Caco-2 (cell line): ENCODE measurements at regions of chr2 and their contacts with region 1.

Region 1: DNA sequence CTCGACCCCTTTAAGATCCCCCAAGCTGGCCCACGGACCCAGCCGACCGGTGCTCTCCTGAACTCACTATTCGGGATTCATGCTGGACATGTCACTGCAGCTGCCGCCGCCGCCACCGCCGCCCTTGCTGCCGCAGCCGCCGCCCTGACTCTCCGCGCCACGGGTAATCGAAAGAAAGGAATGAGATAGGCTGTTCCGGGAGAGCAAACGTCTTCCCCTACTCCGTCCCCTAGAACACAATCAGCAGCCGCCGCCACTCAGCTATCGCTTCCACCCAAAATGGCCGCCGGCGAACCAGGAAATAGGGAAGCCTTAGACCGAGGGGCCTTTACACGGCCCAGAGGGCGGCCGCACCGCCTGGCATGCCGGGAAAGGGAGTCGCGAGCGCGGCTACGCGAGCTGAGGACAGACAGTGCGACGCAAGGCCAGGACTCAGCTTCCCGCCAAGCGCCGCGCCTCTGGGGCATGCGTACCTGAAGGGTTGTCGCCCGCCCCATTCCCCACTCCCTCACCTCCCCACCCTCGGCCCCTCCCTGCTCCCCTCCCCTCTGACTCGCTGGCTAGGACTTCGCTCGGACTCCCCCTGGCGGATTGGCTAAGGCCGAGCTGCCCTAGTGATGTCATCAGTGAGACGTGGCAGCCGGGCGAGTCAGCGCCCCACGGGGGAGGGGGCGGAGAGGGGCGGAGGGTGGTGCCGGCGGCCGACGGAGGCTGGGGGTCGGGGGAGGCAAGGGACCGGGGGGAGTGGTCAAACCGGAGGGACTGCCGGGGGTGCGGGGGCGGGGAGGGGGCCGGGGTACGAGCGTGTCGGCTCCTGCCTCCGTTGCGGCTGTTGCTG is at the start of gene RAB1A:
- DNase-seq: peak; percentile 99 to 100
- H3K4me3 ChIP-seq: peak within 1 kb of the TSS; percentile 69
- H3K4me3 Mint-ChIP-seq: peak within 1 kb of the TSS; percentile 93
- H3K27ac Mint-ChIP-seq: peak within 1 kb of the TSS; percentile 97
- H3K4me1 ChIP-seq: peaks cover 43% of the 10 kb centered on the region
- H3K4me1 Mint-ChIP-seq: peaks cover 13% of the 10 kb centered on the region
- H3K27me3 ChIP-seq: no peaks in the 10 kb centered on the region
- H3K27me3 Mint-ChIP-seq: no peaks in the 10 kb centered on the region
- CTCF ChIP-seq: peak; percentile 38 to 61
- total RNA-seq, gene RAB1A: 193 and 207 TPM in 2 replicates

Region 2: DNA sequence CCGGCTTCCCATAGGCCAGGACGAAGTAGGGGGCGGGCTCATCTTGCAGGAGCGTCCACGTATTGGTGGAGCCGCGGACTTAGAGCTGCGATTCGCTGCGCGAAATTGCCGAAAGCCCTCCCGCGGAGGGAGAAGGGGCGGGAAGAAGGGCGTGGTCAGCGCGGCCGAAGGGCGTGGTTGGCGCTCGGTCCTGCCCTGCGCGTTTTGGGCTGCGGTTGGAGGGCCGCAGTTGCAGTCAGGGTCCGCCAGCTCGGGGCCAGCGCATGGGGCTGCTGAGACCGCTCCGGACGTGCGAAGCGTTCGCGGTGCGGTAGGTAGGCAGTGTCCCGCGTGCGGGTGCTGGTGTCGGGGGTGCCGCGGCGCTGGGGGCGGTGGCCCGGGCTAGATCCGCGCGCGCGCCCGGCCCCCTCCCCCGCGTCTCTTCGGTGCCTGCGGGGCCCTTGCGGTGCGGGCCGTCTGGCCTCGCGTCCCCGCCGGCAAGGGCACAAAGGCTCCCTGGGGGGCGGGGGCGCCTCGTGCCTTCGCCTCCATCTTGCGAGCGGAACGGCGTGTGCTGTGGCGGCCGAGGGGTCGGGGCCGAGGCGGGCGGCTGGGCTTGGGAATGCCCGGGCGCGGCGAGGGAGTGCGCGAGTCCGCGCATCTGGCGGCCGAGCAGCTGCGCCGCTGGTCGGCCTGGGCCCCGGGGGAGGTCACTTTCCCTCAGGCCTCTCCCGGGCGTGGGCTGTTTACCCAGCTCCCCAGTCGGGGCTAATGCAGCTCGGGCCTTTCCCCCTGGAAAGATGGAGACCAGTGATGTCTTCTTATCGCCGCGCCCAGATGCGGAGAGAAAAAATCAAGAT is 73.6 kb before region 1 on chr2 and contains the start of gene CEP68:
- CTCF ChIA-PET with region 1: interaction called, 10 read pairs
- POLR2A ChIA-PET with region 1: interaction called, 26 read pairs
- intact Hi-C with region 1: loop called (anchors 2 kb)
- DNase-seq: peak; percentile 98 to 99
- H3K4me3 ChIP-seq: peak within 1 kb of the TSS; percentile 78
- H3K4me3 Mint-ChIP-seq: peak within 1 kb of the TSS; percentile 99
- H3K27ac Mint-ChIP-seq: peak within 1 kb of the TSS; percentile 42
- H3K4me1 ChIP-seq: peaks cover 22% of the 10 kb centered on the region
- H3K4me1 Mint-ChIP-seq: peaks cover 19% of the 10 kb centered on the region
- H3K27me3 ChIP-seq: no peaks in the 10 kb centered on the region
- H3K27me3 Mint-ChIP-seq: no peaks in the 10 kb centered on the region
- CTCF ChIP-seq: no peak
- total RNA-seq, gene CEP68: 12.9 and 14.0 TPM in 2 replicates

Region 3: DNA sequence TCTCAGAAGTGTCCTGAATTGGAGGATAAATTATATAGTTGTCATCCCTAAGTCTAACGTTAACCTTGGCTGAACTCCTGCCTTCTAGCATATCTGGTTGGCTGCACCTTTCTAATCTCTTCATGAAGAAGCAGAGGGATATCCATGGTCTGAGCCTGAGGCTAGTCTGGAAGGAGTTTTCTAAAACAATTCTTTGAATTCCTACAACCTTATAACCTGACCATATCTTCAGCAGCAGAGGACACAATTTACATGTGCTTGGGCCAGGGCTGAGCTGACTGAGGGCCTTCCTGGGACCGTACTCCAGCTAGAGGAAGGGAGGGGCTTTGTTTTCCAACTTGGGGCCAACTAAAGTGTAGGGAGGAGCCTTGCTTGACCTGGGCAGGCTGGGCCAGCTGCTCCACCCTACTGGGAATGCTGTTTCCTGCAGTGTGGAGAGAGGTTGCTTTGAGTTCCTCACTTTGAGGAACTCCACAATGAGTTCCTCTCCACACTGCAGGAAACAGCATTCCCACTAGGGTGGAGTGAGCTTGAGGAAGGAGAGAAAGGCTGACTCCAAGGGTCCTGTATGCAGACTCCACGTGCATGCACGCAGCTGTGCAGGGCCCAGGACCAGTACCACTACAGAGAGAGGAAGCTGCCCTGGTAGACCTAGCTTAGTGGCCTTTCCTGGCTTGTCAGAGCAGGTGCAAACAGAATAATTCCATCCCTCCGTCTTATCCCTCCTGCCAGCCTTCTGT is 54.3 kb before region 1 on chr2:
- CTCF ChIA-PET with region 1: no interaction called
- POLR2A ChIA-PET with region 1: interaction called, 11 read pairs
- intact Hi-C with region 1: no loop called
- DNase-seq: peak; percentile 53 to 67
- H3K4me3 ChIP-seq: no peak overlapping the region
- H3K4me3 Mint-ChIP-seq: no peak overlapping the region
- H3K27ac Mint-ChIP-seq: no peak overlapping the region
- H3K4me1 ChIP-seq: peaks cover 8% of the 10 kb centered on the region
- H3K4me1 Mint-ChIP-seq: peaks cover 9% of the 10 kb centered on the region
- H3K27me3 ChIP-seq: no peaks in the 10 kb centered on the region
- H3K27me3 Mint-ChIP-seq: no peaks in the 10 kb centered on the region
- CTCF ChIP-seq: no peak

Region 4: GRCh38 chr2:65116645-65117044 is 13.4 kb before region 1 on chr2:
- CTCF ChIA-PET with region 1: no interaction called
- POLR2A ChIA-PET with region 1: interaction called, 16 read pairs
- intact Hi-C with region 1: no loop called
- DNase-seq: no peak
- H3K4me3 ChIP-seq: no peak overlapping the region
- H3K4me3 Mint-ChIP-seq: no peak overlapping the region
- H3K27ac Mint-ChIP-seq: no peak overlapping the region
- H3K4me1 ChIP-seq: no peaks in the 10 kb centered on the region; the same call in 1 of the 2 replicates
- H3K4me1 Mint-ChIP-seq: no peaks in the 10 kb centered on the region
- H3K27me3 ChIP-seq: no peaks in the 10 kb centered on the region
- H3K27me3 Mint-ChIP-seq: no peaks in the 10 kb centered on the region
- CTCF ChIP-seq: no peak

Region 5: DNA sequence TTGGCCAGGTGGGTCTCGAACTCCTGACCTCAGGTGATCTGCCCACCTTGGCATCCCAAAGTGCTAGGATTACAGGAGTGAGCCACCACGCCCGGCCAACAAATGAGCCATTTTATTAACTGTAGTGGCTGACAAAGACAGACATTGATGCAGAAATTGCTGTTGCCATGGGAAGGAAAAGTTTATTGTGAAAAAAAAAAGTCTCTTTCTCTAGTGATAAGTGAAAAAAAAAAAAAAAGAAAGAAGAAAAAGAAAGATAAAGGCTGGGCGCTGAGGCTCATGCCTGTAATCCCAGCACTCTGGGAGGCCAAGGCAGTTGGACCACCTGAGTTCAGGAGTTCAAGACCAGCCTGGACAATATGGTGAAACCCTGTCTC is 39.7 kb after region 1 on chr2:
- CTCF ChIA-PET with region 1: interaction called, 5 read pairs
- POLR2A ChIA-PET with region 1: interaction called, 5 read pairs
- intact Hi-C with region 1: loop called (anchors 2 kb)
- DNase-seq: no peak
- H3K4me3 ChIP-seq: no peak overlapping the region
- H3K4me3 Mint-ChIP-seq: no peak overlapping the region
- H3K27ac Mint-ChIP-seq: peak overlapping the region; percentile 67
- H3K4me1 ChIP-seq: peaks cover 19% of the 10 kb centered on the region
- H3K4me1 Mint-ChIP-seq: no peaks in the 10 kb centered on the region
- H3K27me3 ChIP-seq: no peaks in the 10 kb centered on the region
- H3K27me3 Mint-ChIP-seq: no peaks in the 10 kb centered on the region
- CTCF ChIP-seq: no peak

Region 6: DNA sequence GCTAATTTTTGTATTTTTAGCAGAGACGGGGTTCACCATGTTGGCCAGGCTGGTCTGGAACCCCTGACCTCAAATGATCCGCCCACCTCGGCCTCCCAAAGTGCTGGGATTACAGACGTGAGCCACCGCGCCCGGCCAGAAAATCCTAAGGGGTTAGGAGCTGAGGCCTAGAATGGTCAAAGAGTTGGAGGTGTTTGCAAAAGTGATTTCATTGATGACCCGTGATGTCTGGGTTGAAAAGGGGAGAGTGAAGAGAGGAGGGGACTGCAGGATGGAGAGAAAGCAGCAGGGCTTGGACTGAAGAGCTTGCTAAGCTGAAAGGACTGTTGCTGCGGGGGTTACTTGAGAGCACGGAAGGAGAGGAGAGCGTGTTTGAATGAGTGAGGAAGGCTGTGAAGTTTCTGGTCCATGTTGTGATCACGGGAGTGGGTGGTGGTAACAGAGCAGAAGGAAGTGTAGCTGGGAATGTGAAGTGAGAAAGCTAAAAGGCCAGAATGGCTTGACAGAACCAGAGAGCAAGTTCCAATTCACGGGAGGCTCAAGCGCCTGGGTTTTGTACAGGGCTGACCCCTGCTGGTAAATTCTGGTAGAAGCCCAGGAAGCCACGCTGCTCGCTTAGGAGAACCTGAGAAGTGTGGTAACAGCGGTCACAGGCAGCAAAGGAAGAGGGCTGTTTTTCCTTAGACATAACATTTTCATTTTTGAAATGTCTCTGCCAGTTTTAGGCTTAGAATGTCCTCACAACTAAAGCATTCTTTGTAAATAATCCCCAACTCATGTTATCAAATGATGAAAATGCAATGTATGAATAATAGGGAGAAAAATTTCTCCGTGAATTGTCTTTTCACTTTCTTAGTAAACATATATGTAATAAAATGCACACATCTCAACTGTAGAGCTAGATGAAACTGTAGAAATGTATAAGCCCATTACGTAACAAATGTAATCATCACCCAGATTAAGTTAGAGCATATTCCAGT is 57.1 kb after region 1 on chr2:
- CTCF ChIA-PET with region 1: interaction called, 22 read pairs
- POLR2A ChIA-PET with region 1: interaction called, 11 read pairs
- intact Hi-C with region 1: loop called (anchors 1 kb)
- DNase-seq: peak; percentile 83 to 90
- H3K4me3 ChIP-seq: no peak overlapping the region
- H3K4me3 Mint-ChIP-seq: no peak overlapping the region
- H3K27ac Mint-ChIP-seq: no peak overlapping the region
- H3K4me1 ChIP-seq: peaks cover 14% of the 10 kb centered on the region
- H3K4me1 Mint-ChIP-seq: peaks cover 14% of the 10 kb centered on the region
- H3K27me3 ChIP-seq: no peaks in the 10 kb centered on the region
- H3K27me3 Mint-ChIP-seq: peaks cover 4% of the 10 kb centered on the region
- CTCF ChIP-seq: peak; percentile 85 to 86

Region 7: DNA sequence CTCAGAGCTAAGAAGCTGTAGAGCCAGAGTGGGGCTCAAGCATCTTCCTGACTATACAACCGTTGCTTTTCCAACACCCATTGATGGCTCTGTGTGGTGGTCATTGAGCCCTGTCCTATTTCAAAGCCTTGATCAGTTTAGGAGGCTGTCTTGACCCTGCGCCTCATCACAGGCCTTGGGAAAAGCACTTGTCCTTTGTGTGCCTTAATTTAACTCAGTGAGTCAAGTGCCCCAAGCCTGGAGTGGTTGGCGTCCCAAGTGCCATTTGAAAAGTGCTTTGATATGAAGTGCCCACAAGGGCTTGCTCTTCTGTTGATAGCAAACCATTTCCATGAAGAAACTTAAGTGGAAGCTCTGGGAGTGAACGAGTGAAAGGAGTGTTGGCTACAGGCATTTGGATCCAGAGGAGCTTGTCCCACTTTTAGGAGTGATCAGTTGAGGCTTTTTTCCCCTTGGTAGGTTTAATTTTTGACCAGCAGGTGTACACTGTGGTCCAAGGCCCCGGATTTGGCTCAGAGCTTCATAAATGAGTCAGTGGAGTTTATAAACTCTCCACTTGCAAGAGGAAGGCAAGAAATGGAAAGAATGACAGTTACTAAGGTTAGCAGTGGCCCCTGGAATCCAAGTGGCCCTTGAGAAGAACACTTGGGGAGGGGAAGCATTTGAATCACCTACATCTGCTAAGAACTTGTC is 147.9 kb after region 1 on chr2:
- CTCF ChIA-PET with region 1: no interaction called
- POLR2A ChIA-PET with region 1: interaction called, 13 read pairs
- intact Hi-C with region 1: no loop called
- DNase-seq: no peak
- H3K4me3 ChIP-seq: no peak overlapping the region
- H3K4me3 Mint-ChIP-seq: no peak overlapping the region
- H3K27ac Mint-ChIP-seq: no peak overlapping the region
- H3K4me1 ChIP-seq: no peaks in the 10 kb centered on the region
- H3K4me1 Mint-ChIP-seq: no peaks in the 10 kb centered on the region
- H3K27me3 ChIP-seq: no peaks in the 10 kb centered on the region
- H3K27me3 Mint-ChIP-seq: no peaks in the 10 kb centered on the region
- CTCF ChIP-seq: peak in 1 of 2 experiments; percentile 2

Region 8: GRCh38 chr2:65666156-65666725 is 536.2 kb after region 1 on chr2:
- CTCF ChIA-PET with region 1: no interaction called
- POLR2A ChIA-PET with region 1: no interaction called
- intact Hi-C with region 1: no loop called
- DNase-seq: no peak
- H3K4me3 ChIP-seq: no peak overlapping the region
- H3K4me3 Mint-ChIP-seq: no peak overlapping the region
- H3K27ac Mint-ChIP-seq: no peak overlapping the region
- H3K4me1 ChIP-seq: no peaks in the 10 kb centered on the region
- H3K4me1 Mint-ChIP-seq: no peaks in the 10 kb centered on the region
- H3K27me3 ChIP-seq: no peaks in the 10 kb centered on the region
- H3K27me3 Mint-ChIP-seq: peaks cover 6% of the 10 kb centered on the region
- CTCF ChIP-seq: no peak